ENCODE measurements at regions of chr6 and their contacts with region 1.

Region 1: GRCh38 chr6:156185113-156185512 is 592.1 kb upstream of the ARID1B start:
- DNase-seq: no peak
- ATAC-seq: no peak
- H3K4me3 ChIP-seq: no peak overlapping the region
- H3K4me3 Mint-ChIP-seq: no peak overlapping the region
- H3K27ac ChIP-seq: no peak overlapping the region
- H3K27ac Mint-ChIP-seq: peak overlapping the region in 1 of 2 donors; percentile 37
- H3K4me1 ChIP-seq: peaks cover 0 to 7% of the 10 kb centered on the region in 2 experiments
- H3K4me1 Mint-ChIP-seq: peaks cover 8 to 24% (median 22%) of the 10 kb centered on the region in 3 donors
- H3K27me3 ChIP-seq: no peaks in the 10 kb centered on the region
- H3K27me3 Mint-ChIP-seq: no peaks in the 10 kb centered on the region

Region 2: DNA sequence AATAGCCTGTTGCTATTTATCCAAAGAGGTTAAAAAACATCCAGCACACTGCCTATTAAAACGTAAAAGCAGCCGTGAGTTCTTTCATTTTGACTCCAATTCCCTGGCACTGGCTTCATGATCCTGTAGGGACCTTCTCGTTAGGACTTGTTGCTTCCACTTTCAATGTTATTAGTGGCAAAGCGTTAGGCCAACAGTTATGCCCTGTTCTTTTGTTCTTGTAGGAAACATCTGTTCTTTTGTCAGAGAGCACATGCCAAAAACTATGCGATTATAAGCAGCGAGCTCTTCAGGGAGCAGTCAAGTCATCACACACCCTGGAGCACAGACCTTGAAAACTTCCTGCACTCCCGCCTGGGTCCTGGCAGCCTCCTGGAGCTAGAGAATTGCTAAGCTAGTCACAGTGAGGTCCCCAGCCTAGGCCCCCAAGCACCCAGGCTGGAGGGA is 17.5 kb before region 1 on chr6:
- CTCF ChIA-PET with region 1: no interaction called
- POLR2A ChIA-PET with region 1: interaction called in 1 of 2 experiments, 14 read pairs
- DNase-seq: no peak
- ATAC-seq: peak in 1 of 4 experiments; percentile 51
- H3K4me3 ChIP-seq: no peak overlapping the region
- H3K4me3 Mint-ChIP-seq: peak overlapping the region; percentile 71 to 74 (median 72)
- H3K27ac ChIP-seq: no peak overlapping the region
- H3K27ac Mint-ChIP-seq: peak overlapping the region; percentile 86 to 91
- H3K4me1 ChIP-seq: peaks cover 7 to 10% of the 10 kb centered on the region in 2 experiments
- H3K4me1 Mint-ChIP-seq: peaks cover 36 to 58% (median 53%) of the 10 kb centered on the region in 3 donors
- H3K27me3 ChIP-seq: peaks cover 0 to 4% of the 10 kb centered on the region in 2 experiments
- H3K27me3 Mint-ChIP-seq: no peaks in the 10 kb centered on the region

Region 3: GRCh38 chr6:157741948-157742556 is 1556.9 kb after region 1 on chr6:
- CTCF ChIA-PET with region 1: no interaction called
- POLR2A ChIA-PET with region 1: no interaction called
- DNase-seq: no peak
- ATAC-seq: no peak
- H3K4me3 ChIP-seq: no peak overlapping the region
- H3K4me3 Mint-ChIP-seq: no peak overlapping the region
- H3K27ac ChIP-seq: no peak overlapping the region
- H3K27ac Mint-ChIP-seq: no peak overlapping the region
- H3K4me1 ChIP-seq: no peaks in the 10 kb centered on the region
- H3K4me1 Mint-ChIP-seq: no peaks in the 10 kb centered on the region
- H3K27me3 ChIP-seq: no peaks in the 10 kb centered on the region
- H3K27me3 Mint-ChIP-seq: peaks cover 0 to 16% of the 10 kb centered on the region in 2 donors